Motor neuron (in vitro differentiated cells): ENCODE measurements at regions of chr18 and their contacts with region 1.

Region 1: DNA sequence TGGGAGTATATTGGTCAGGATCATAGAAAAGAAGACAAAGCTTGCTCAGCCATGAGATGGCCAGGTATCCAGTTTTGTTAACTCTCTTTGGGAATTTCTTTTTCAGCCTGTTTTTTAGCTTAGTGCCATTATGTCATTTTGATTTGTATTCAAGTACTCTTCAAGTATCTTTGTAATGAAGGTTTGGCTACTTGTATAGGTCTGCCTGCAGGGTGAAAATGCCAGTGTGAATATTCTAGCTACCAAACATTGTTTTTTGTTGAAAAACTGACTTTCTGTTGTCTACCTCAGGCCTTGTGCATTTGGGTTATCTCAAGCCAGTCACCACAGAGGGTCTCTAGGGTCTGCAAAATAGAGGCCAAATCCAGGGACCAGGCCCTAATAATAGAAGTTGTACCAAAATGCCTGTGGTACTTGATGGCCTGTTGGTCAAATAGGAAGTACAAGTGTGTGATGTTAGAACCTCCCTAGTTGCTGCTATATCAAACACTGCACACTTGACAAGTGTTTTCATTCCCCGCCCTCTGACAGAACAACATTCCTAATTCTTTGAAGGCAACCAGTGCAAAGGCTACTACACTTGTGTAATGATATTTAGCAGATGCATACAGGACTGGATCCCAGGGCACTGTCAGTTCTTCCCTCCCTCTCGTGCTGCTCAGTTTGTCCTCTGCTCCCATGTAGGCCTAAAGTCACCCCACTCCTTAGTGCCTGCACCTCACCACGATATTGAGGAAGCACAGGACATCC is 36.4 kb downstream of the RNMT start:
- ATAC-seq: no peak
- H3K4me3 ChIP-seq: no peak overlapping the region
- H3K27ac ChIP-seq: no peak overlapping the region
- H3K4me1 ChIP-seq: no peaks in the 10 kb centered on the region

Region 2: GRCh38 chr18:13653746-13654433 is 109.0 kb before region 1 on chr18:
- in situ Hi-C with region 1: loop called in 1 of 9 experiments (anchors 25 kb)
- ATAC-seq: peak in 6 of 8 experiments; percentile 59 to 93 (median 76)
- H3K4me3 ChIP-seq: no peak overlapping the region
- H3K27ac ChIP-seq: no peak overlapping the region
- H3K4me1 ChIP-seq: peaks cover 4 to 11% of the 10 kb centered on the region in 2 donors